ENCODE measurements at regions of chr7 and their contacts with region 1.

Region 1: GRCh38 chr7:56079450-56080185 is 13.1 kb downstream of the PHKG1 start:
- DNase-seq: peak; percentile 64 to 93 (median 85)

Region 2: DNA sequence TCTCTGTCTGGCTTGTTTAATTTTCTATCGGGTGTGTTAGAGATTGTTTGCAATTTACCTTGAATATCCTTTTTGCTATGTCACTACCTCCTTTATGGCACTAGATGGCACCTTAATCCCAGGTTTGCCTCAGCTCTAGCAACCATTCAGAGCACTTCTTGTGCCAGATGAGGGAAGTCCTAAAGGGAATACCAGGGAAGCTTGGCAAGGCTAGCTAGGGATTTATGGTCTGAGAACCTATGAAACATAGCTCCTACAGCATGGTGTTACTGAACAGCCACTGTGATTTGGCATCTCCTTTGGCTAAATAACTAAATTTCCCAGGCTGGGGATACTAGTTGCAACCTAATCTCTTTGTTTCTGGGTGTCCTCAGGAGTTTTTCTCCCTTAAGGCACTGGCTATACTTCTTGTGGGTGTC is 438.3 kb before region 1 on chr7:
- intact Hi-C with region 1: loop called (anchors 5 kb)
- DNase-seq: peak in 26 of 42 donors; percentile 8 to 71 (median 37)

Region 3: DNA sequence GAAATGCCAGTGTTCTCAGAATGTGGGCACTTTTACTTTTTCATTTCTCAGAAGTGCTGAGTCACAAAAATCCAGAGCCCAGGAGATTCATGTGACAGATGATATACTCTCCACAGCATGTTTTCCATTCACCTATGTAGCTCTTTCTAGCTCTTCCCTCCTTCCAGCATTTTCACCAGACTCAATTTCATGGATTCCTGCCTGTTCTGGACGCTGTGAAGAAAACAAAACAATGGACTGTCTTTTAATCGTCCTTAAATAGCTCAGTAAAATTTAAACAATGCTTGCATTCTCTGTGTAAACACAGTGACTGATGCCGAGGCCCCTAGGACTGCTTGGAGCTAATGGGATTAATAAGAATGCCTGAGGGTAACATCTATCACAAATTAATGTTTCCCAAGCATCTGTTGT is 166.9 kb before region 1 on chr7:
- intact Hi-C with region 1: no loop called
- DNase-seq: peak in 6 of 42 donors; percentile 16 to 46 (median 21)

Region 4: GRCh38 chr7:56009695-56010094 is 69.9 kb before region 1 on chr7:
- intact Hi-C with region 1: loop called (anchors 5 kb)
- DNase-seq: peak; percentile 15 to 85 (median 61)

Region 5: DNA sequence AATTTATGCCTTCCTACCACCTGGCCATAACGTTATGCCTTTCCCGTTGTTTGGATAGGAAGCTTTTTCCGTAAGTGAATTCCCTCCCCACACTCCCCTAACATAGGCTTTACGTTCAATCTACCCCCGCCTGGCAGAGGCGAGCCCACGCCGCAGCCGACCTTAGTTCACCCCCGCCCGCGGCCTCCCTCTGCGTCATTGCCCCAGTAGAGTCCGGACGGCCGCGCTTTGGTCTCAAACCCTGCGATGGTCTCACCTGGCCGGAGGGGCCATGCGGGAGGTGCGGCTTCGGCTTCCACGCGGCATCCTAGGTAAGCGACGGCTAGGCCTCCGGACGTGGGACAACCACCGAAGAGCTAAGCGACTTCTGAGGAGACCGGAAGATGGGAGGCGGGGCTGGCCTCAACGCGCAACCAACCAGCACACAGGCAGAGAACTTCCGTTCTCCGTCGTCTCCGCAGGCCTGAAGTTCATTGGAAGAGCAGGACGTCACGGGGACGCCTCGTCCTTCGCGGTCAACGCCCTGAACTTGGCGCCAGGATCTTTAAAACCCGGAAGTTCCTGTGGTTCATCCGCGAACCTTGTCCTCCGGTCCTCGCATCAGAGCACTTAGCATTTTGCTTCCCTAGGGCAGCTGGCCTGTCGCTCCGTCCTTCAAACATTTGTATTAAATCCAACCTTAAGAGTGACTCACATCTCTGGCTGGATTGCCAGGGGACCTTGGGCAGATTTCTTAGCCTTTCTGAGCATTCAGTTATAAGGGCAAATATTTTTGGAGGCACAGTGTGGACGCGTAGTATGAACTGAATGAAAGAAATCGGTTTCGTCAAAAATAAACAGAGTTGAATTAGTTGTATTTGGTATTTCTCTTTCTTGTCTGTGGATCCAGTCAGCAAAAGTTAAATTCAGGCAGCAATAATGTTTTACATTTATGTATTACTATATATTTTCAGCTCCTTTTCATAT is 26.8 kb after region 1 on chr7 and contains the start of gene CHCHD2:
- intact Hi-C with region 1: no loop called
- DNase-seq: peak; percentile 94 to 99 (median 98)

Measured in head of caudate nucleus (tissue), 42 donors.